GM12878 (cell line): ENCODE measurements at regions of chr1 and their contacts with region 1.

Region 1: GRCh38 chr1:246002725-246003441 is 504.2 kb downstream of the SMYD3 start:
- DNase-seq: peak; percentile 39
- ATAC-seq: peak; percentile 85
- H3K4me3 ChIP-seq: no peak overlapping the region
- H3K27ac ChIP-seq: no peak overlapping the region
- H3K4me1 ChIP-seq: peaks cover 4% of the 10 kb centered on the region; the same call in 1 of the 2 replicates
- H3K27me3 ChIP-seq: no peaks in the 10 kb centered on the region
- CTCF ChIP-seq: peak; percentile 77 to 91 (median 82)
- EP300 ChIP-seq: no peak
- POLR2A ChIP-seq: no peak
- RAD21 ChIP-seq: peak; percentile 99

Region 2: GRCh38 chr1:245512980-245513578 is 489.8 kb before region 1 on chr1:
- CTCF ChIA-PET with region 1: interaction called, 4 read pairs
- POLR2A ChIA-PET with region 1: no interaction called
- RAD21 ChIA-PET with region 1: no interaction called
- SMC1A ChIA-PET with region 1: interaction called, 4 read pairs
- in situ Hi-C with region 1: no loop called
- intact Hi-C with region 1: loop called (anchors 5 kb)
- DNase-seq: no peak
- ATAC-seq: peak; percentile 69
- H3K4me3 ChIP-seq: no peak overlapping the region
- H3K27ac ChIP-seq: no peak overlapping the region
- H3K4me1 ChIP-seq: no peaks in the 10 kb centered on the region
- H3K27me3 ChIP-seq: no peaks in the 10 kb centered on the region; a peak in 1 of 4 replicates
- CTCF ChIP-seq: peak in 2 of 3 experiments; percentile 13 to 21; a peak in 1 of 6 replicates
- EP300 ChIP-seq: no peak
- POLR2A ChIP-seq: no peak
- RAD21 ChIP-seq: no peak

Region 3: GRCh38 chr1:245645894-245646293 is 357.0 kb before region 1 on chr1:
- CTCF ChIA-PET with region 1: interaction called, 6 read pairs
- POLR2A ChIA-PET with region 1: no interaction called
- RAD21 ChIA-PET with region 1: interaction called, 3 read pairs
- SMC1A ChIA-PET with region 1: interaction called, 4 read pairs
- in situ Hi-C with region 1: no loop called
- intact Hi-C with region 1: loop called (anchors 10 kb)
- DNase-seq: peak; percentile 72
- ATAC-seq: peak; percentile 76
- H3K4me3 ChIP-seq: peak overlapping the region; percentile 61
- H3K27ac ChIP-seq: peak overlapping the region; percentile 84
- H3K4me1 ChIP-seq: peaks cover 21% of the 10 kb centered on the region
- H3K27me3 ChIP-seq: no peaks in the 10 kb centered on the region
- CTCF ChIP-seq: no peak
- EP300 ChIP-seq: peak; percentile 46 to 78; a peak in 2 of 4 replicates
- POLR2A ChIP-seq: no peak
- RAD21 ChIP-seq: no peak

Region 4: GRCh38 chr1:245807306-245807705 is 195.6 kb before region 1 on chr1:
- CTCF ChIA-PET with region 1: no interaction called
- POLR2A ChIA-PET with region 1: no interaction called
- RAD21 ChIA-PET with region 1: interaction called, 3 read pairs
- SMC1A ChIA-PET with region 1: interaction called, 3 read pairs
- in situ Hi-C with region 1: no loop called
- intact Hi-C with region 1: loop called (anchors 5 kb)
- DNase-seq: peak; percentile 80
- ATAC-seq: peak; percentile 91
- H3K4me3 ChIP-seq: peak overlapping the region; percentile 37; the same call in 1 of the 2 replicates
- H3K27ac ChIP-seq: peak overlapping the region; percentile 41
- H3K4me1 ChIP-seq: peaks cover 45% of the 10 kb centered on the region
- H3K27me3 ChIP-seq: no peaks in the 10 kb centered on the region
- CTCF ChIP-seq: no peak
- EP300 ChIP-seq: no peak
- POLR2A ChIP-seq: no peak
- RAD21 ChIP-seq: no peak

Region 5: DNA sequence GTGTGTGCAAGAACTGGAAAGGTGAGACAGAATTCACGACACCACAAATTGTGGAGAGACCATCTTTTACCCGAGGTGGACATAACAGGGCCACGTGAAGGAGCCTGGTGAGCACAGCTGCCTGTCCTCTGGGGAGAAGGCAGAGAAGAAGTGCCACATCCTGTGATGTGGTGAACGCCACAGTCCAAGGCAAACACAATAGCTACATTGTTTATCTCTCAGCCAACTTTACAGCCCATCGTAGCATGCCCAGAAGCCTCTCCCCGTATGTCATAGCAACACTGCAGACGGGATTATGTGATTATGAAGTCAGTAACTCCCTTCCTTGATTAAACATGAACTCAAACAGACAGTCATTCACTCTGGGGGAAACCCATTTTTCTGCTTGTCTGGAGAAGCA is 108.0 kb before region 1 on chr1:
- CTCF ChIA-PET with region 1: interaction called, 48 read pairs
- POLR2A ChIA-PET with region 1: no interaction called
- RAD21 ChIA-PET with region 1: interaction called, 17 read pairs
- SMC1A ChIA-PET with region 1: interaction called, 7 read pairs
- in situ Hi-C with region 1: loop called (anchors 5 kb)
- intact Hi-C with region 1: no loop called
- DNase-seq: peak; percentile 59
- ATAC-seq: peak; percentile 95
- H3K4me3 ChIP-seq: no peak overlapping the region
- H3K27ac ChIP-seq: peak overlapping the region; percentile 47
- H3K4me1 ChIP-seq: peaks cover 4% of the 10 kb centered on the region; the same call in 1 of the 2 replicates
- H3K27me3 ChIP-seq: no peaks in the 10 kb centered on the region
- CTCF ChIP-seq: no peak
- EP300 ChIP-seq: peak; percentile 48 to 67; a peak in 2 of 4 replicates
- POLR2A ChIP-seq: no peak
- RAD21 ChIP-seq: no peak

Region 6: DNA sequence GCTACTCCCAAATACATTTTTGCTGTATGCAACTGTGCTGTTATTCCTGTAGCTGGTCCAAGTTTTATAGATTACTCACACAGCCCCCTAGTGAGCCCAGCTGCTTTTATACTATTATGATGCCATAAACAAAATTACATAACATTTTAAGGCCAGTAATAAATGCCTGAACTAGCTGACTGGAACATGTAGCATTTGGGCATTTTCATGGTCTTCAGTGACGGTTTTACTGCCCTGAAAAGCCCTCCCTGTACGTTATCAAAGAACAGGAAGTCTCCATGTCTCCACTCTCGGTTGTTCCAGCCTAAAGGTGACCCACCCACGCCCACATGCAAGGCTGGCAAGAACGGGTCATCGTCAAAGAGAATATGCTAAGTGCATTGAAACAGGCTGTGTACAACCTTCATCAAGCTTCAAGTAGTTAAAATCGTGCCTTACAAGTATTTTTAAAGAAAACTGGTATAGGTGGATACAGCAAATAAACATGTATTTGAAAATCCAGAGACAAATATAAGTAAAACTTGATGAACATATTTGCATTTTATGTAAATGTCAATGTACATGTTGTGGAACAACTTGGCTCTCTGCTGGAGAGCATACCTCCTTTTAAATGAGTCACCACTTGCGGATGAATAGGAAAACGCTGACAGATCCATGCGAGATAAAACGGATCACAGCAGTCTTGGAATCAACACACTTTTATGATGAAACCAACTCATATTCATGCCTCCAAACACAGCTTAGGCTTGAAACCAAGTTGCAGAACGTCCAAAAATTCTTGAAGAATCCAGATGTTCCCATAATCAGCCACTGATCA is 16.3 kb before region 1 on chr1:
- CTCF ChIA-PET with region 1: interaction called, 4 read pairs
- POLR2A ChIA-PET with region 1: no interaction called
- RAD21 ChIA-PET with region 1: interaction called, 13 read pairs
- SMC1A ChIA-PET with region 1: interaction called, 13 read pairs
- in situ Hi-C with region 1: no loop called
- intact Hi-C with region 1: no loop called
- DNase-seq: no peak
- ATAC-seq: no peak
- H3K4me3 ChIP-seq: no peak overlapping the region
- H3K27ac ChIP-seq: no peak overlapping the region
- H3K4me1 ChIP-seq: peaks cover 16% of the 10 kb centered on the region
- H3K27me3 ChIP-seq: no peaks in the 10 kb centered on the region
- CTCF ChIP-seq: no peak
- EP300 ChIP-seq: no peak
- POLR2A ChIP-seq: no peak
- RAD21 ChIP-seq: no peak